SK-MEL-5 (cell line): ENCODE measurements at regions of chr12 and their contacts with region 1.

Region 1: DNA sequence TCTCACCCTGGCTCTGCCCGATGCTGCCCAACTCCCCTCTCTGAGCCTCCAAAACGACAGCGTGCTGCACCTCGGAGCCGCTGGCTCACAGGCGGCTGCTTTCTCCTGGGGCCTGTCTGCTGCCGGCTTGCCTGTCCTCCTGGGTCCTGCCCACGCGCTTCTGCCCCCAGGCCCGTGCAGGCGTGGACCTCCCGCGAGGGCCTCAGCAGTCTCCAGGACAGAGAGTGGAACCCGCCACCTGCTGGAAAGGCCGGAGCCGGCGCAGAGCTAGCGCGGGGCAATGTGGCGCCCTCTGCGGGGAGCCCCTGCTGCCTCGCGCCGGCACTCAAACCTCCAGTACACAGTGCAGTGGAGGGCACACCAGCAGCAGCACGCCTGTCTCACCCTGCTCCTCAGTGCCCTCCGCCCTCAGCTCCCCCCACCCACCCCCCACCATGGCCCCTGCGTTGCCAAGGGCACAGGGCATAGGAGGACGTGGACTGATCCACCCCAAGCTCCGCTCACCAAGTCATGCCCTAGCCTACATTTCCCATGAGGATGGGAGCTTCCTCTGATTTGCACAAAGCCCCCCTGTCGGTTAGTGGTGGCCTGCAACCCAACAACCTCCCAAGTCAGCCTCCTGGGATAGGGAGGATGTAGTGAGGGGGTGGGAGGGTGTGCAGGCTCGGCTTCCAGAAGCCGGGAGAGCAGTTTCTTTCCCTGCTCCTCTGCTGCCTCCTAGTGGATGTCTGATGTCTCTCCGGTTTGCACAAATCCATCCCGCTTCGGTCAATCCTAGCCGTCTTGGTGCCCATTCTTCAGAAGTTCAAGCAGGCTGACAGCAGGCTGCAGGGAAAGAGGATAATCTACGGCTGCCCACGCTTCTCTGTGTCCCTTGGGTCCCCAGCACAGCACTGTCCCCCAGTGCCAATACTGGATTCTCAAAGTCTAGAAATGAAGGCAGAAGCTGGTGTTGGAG is 25.2 kb downstream of the KRT8 start:
- DNase-seq: peak; percentile 92

Region 2: DNA sequence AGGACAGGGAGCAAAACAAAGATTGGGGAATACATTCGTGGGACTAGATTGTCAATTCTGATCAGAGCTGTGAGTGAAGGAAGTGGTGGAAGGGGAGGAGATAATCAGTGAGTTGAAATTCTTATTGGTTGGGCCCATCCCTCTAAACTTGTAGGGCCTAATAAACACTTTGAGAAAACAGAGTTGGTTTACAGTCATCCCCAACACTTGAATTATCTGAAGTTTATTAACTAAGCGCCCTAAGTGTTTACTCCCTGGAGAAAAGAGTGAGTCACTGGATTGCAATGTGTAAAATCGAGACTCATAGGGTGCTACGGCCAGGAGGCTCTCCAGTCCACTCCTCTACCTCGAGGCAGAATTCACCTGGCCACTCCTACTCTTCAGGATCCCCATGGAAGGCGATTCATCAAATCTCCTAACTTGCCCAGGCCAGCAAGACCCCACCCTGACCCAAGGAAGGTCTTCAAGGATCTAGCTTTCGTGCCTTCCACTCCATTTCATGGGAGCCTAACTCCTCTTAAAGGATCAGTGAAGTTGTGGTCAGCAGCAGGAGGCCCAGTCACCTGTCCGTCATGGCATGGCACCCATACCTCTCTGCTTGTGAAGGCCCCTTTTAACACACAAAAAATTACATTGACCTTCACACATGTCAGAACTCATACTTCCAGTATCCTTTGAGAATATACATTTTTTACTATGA is 80.5 kb before region 1 on chr12:
- in situ Hi-C with region 1: no loop called
- DNase-seq: no peak

Region 3: DNA sequence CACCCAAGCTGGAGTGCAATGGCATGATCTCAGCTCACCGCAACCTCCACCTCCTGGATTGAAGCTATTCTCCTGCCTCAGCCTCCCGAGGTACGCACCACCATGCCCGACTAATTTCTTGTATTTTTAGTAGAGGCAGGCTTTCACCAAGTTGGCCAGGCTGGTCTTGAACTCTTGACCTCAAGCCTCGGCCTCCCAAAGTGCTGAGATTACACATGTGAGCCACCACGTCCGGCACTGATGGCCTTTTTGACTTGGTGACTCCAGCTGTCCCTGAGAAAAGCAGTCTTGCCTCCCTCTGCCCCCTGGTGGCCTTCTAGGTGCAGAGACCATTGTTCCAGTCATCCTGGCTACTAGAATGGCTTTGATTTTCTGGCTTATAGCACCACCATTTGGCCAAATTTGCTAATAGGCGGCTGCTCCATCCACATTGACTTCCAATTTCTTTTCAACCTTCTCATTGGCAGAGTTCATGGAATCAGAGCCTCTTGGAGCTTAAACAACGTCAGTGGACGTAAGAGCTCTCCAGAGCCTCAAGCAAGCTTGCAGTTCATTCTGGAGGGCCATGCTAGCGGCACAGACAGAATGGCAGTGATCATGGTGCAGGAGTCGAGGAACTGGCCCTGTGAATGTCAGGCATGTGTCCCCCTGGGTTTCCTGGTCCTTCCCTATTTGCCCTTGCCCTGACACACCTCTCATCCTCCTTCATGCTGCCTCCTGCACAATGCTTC is 101.2 kb after region 1 on chr12:
- in situ Hi-C with region 1: loop called (anchors 25 kb)
- DNase-seq: peak; percentile 97